ENCODE measurements at regions of chr15 and their contacts with region 1.

Region 1: GRCh38 chr15:74307827-74308644 is 59.4 kb downstream of the CYP11A1 start:
- DNase-seq: peak; percentile 43
- H3K4me3 ChIP-seq: no peak overlapping the region
- H3K27ac ChIP-seq: no peak overlapping the region
- H3K4me1 ChIP-seq: no peaks in the 10 kb centered on the region
- H3K27me3 ChIP-seq: peaks cover 18 to 31% of the 10 kb centered on the region in 2 experiments
- CTCF ChIP-seq: peak; percentile 55 to 74
- POLR2A ChIP-seq: no peak

Region 2: GRCh38 chr15:74042603-74043424 is 265.2 kb before region 1 on chr15:
- CTCF ChIA-PET with region 1: no interaction called
- POLR2A ChIA-PET with region 1: no interaction called
- dilution Hi-C with region 1: no loop called
- intact Hi-C with region 1: no loop called
- DNase-seq: no peak
- H3K4me3 ChIP-seq: no peak overlapping the region
- H3K27ac ChIP-seq: no peak overlapping the region
- H3K4me1 ChIP-seq: peaks cover 9% of the 10 kb centered on the region
- H3K27me3 ChIP-seq: no peaks in the 10 kb centered on the region
- CTCF ChIP-seq: no peak
- POLR2A ChIP-seq: no peak

Region 3: GRCh38 chr15:74053941-74054529 is 254.0 kb before region 1 on chr15:
- CTCF ChIA-PET with region 1: interaction called, 8 read pairs
- POLR2A ChIA-PET with region 1: no interaction called
- dilution Hi-C with region 1: no loop called
- intact Hi-C with region 1: loop called (anchors 5 kb)
- DNase-seq: peak; percentile 41
- H3K4me3 ChIP-seq: no peak overlapping the region
- H3K27ac ChIP-seq: no peak overlapping the region
- H3K4me1 ChIP-seq: no peaks in the 10 kb centered on the region
- H3K27me3 ChIP-seq: peaks cover 3 to 12% of the 10 kb centered on the region in 2 experiments
- CTCF ChIP-seq: peak; percentile 19 to 77
- POLR2A ChIP-seq: no peak

Region 4: GRCh38 chr15:74127260-74127953 is 180.6 kb before region 1 on chr15:
- CTCF ChIA-PET with region 1: interaction called, 115 read pairs
- POLR2A ChIA-PET with region 1: no interaction called
- dilution Hi-C with region 1: no loop called
- intact Hi-C with region 1: loop called (anchors 1 kb)
- DNase-seq: peak; percentile 75
- H3K4me3 ChIP-seq: peak overlapping the region in 1 of 3 experiments; percentile 14
- H3K27ac ChIP-seq: no peak overlapping the region
- H3K4me1 ChIP-seq: peaks cover 4% of the 10 kb centered on the region
- H3K27me3 ChIP-seq: peaks cover 56 to 71% of the 10 kb centered on the region in 2 experiments
- CTCF ChIP-seq: peak; percentile 95 to 100
- POLR2A ChIP-seq: no peak

Region 5: DNA sequence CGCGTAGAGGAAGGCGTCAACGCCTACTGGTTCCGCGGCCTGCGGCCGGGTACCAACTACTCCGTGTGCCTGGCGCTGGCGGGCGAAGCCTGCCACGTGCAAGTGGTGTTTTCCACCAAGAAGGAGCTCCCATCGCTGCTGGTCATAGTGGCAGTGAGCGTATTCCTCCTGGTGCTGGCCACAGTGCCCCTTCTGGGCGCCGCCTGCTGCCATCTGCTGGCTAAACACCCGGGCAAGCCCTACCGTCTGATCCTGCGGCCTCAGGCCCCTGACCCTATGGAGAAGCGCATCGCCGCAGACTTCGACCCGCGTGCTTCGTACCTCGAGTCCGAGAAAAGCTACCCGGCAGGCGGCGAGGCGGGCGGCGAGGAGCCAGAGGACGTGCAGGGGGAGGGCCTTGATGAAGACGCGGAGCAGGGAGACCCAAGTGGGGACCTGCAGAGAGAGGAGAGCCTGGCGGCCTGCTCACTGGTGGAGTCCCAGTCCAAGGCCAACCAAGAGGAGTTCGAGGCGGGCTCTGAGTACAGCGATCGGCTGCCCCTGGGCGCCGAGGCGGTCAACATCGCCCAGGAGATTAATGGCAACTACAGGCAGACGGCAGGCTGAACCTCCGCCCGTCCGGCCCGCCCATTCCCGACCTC is 173.5 kb before region 1 on chr15:
- CTCF ChIA-PET with region 1: interaction called, 115 read pairs
- POLR2A ChIA-PET with region 1: no interaction called
- dilution Hi-C with region 1: no loop called
- intact Hi-C with region 1: no loop called
- DNase-seq: peak; percentile 41
- H3K4me3 ChIP-seq: no peak overlapping the region
- H3K27ac ChIP-seq: no peak overlapping the region
- H3K4me1 ChIP-seq: peaks cover 12% of the 10 kb centered on the region
- H3K27me3 ChIP-seq: peaks cover 71 to 76% of the 10 kb centered on the region in 2 experiments
- CTCF ChIP-seq: peak; percentile 48 to 74
- POLR2A ChIP-seq: no peak

Region 6: GRCh38 chr15:74240002-74240568 is 68.0 kb before region 1 on chr15:
- CTCF ChIA-PET with region 1: interaction called, 30 read pairs
- POLR2A ChIA-PET with region 1: no interaction called
- dilution Hi-C with region 1: no loop called
- intact Hi-C with region 1: loop called (anchors 1 kb)
- DNase-seq: peak; percentile 92
- H3K4me3 ChIP-seq: no peak overlapping the region
- H3K27ac ChIP-seq: peak overlapping the region; percentile 13
- H3K4me1 ChIP-seq: peaks cover 11% of the 10 kb centered on the region
- H3K27me3 ChIP-seq: no peaks in the 10 kb centered on the region
- CTCF ChIP-seq: peak; percentile 65 to 80
- POLR2A ChIP-seq: no peak

Region 7: GRCh38 chr15:74291101-74292071 is 16.6 kb before region 1 on chr15:
- CTCF ChIA-PET with region 1: interaction called, 11 read pairs
- POLR2A ChIA-PET with region 1: no interaction called
- dilution Hi-C with region 1: no loop called
- intact Hi-C with region 1: no loop called
- DNase-seq: peak; percentile 60
- H3K4me3 ChIP-seq: no peak overlapping the region
- H3K27ac ChIP-seq: no peak overlapping the region
- H3K4me1 ChIP-seq: peaks cover 4% of the 10 kb centered on the region
- H3K27me3 ChIP-seq: no peaks in the 10 kb centered on the region
- CTCF ChIP-seq: no peak
- POLR2A ChIP-seq: no peak

Region 8: GRCh38 chr15:74322181-74323076 is 14.4 kb after region 1 on chr15:
- CTCF ChIA-PET with region 1: interaction called, 175 read pairs
- POLR2A ChIA-PET with region 1: no interaction called
- dilution Hi-C with region 1: no loop called
- intact Hi-C with region 1: loop called (anchors 1 kb)
- DNase-seq: peak; percentile 49
- H3K4me3 ChIP-seq: no peak overlapping the region
- H3K27ac ChIP-seq: no peak overlapping the region
- H3K4me1 ChIP-seq: no peaks in the 10 kb centered on the region
- H3K27me3 ChIP-seq: peaks cover 0 to 1% of the 10 kb centered on the region in 2 experiments
- CTCF ChIP-seq: peak; percentile 74 to 93
- POLR2A ChIP-seq: no peak

Measured in endothelial cell of umbilical vein (primary cell).